WTC11 (cell line): ENCODE measurements at regions of chr1 and their contacts with region 1.

Region 1: DNA sequence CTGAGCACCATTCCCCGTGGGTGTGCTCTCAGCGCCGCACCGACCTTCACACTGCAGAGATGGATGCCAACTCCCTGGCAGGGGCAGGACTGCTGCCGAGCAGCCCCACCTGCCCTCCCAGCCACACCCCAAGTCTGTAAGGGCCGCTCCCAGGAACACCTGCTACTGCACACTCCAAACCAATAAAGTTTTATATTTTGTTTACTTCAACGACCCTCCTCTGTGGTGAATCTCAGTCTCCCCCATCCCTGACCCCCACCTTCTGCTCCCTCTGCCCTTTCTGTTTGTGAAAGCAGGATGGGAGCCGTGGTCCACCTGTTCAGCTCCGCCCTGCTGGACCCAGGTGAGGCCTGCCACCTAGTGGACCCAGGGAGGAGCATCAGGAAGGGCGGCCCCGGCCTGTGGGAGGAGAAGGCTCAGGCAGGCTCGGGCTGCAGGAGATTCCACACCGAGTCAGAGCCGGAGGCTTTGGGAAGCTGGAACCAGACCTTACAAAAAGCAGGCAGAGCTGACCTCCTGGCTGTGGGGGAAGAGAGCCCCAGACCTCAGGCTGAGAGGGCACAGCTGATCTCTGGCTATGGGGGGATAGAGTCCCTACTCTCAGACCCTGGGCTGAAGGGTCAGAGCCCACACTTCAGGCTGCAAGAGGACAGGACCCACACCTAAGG is 982 bp upstream of the TMEM82 start:
- DNase-seq: peak; percentile 93
- ATAC-seq: peak; percentile 93
- H3K4me3 Mint-ChIP-seq: peak overlapping the region; percentile 29; the same call in 1 of the 2 replicates
- H3K27ac Mint-ChIP-seq: peak overlapping the region; percentile 36
- H3K4me1 Mint-ChIP-seq: peaks cover 8% of the 10 kb centered on the region
- H3K27me3 Mint-ChIP-seq: no peaks in the 10 kb centered on the region; the same call in 1 of the 2 replicates
- CTCF ChIP-seq: peak; percentile 80

Region 2: DNA sequence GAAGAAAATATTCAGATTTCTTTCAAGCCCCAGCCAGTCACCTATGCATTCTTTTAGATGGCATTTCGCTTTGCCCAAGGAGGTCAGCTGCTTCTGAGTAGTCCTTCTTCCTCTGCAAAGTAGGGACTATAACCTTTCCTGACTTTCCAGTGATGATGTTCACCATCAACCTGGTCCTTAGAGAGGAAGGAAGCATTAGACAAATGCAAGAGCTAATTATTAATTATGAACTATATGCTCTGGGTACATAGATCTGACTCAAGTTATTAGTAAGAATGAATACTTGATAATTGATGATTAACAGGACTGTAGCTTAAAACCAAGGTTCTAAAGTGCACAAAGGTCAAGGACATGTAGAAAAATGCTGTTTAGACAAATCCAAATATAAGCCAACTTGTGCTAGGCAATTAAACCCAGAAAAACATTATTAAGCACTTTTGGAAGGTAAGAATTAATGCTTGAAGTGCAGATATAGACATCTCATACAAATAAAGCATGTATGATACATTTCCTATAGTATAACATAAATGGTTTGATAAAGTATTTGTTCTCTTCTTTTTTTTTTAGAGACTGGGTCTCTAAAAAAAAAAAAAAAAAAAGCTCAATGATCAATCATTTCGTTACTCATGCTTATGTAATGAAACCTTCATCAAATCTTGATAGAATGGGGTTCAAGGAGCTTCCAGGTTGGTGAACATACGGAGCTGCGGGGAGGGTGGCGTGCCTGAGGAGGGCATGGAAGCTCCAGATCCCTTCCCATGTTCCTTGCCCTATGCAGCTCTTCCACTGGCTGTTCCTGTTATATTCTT is 145.3 kb before region 1 on chr1:
- CTCF ChIA-PET with region 1: interaction called, 26 read pairs
- POLR2A ChIA-PET with region 1: interaction called, 4 read pairs
- DNase-seq: no peak
- ATAC-seq: peak; percentile 16; the same call in 1 of the 2 replicates
- H3K4me3 Mint-ChIP-seq: no peak overlapping the region
- H3K27ac Mint-ChIP-seq: no peak overlapping the region
- H3K4me1 Mint-ChIP-seq: peaks cover 7% of the 10 kb centered on the region
- H3K27me3 Mint-ChIP-seq: peaks cover 5% of the 10 kb centered on the region
- CTCF ChIP-seq: no peak

Region 3: DNA sequence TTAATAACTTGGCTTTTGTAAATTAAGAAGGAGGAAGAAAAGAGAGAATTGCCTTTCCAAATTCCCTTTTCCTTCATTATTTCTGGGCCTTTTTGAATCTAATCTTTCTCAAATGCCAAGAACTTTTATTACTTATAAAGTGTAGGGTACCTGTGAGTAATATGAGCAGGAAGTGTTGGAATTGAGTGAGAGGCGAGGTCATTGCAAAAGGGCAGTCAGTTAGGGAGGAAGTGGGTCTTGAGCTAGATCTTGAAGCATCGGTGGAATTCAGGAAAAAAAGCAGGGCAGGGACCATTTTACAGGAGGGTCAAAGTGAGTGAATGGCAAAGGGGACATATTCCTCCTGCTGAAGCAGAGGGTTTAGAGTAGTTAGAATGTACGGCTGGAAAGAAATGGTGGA is 100.7 kb before region 1 on chr1:
- CTCF ChIA-PET with region 1: no interaction called
- POLR2A ChIA-PET with region 1: no interaction called
- DNase-seq: no peak
- ATAC-seq: no peak
- H3K4me3 Mint-ChIP-seq: no peak overlapping the region
- H3K27ac Mint-ChIP-seq: 0 out of 2 replicates have a peak overlapping the region, but pooled peaks have one; percentile 7
- H3K4me1 Mint-ChIP-seq: no peaks in the 10 kb centered on the region
- H3K27me3 Mint-ChIP-seq: no peaks in the 10 kb centered on the region
- CTCF ChIP-seq: no peak

Region 4: DNA sequence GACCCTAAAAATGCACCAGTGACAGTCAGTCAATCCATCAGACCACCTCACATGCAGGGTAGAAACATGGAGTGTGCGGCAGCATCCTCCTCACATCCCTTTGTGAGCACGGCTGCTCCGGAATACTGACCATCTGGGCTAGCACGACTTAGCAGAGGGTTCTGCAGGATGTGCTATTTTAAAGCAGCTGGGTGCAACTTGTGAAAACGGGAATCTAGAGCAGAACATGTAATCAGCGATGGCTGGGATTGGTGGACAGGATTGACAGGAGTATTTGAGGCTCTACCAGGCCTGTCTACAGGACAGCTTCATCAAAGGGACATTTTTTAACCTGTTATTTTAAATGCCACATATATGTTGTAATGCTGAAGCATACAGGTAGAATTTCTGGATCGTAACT is 74.0 kb before region 1 on chr1:
- CTCF ChIA-PET with region 1: interaction called, 20 read pairs
- POLR2A ChIA-PET with region 1: no interaction called
- DNase-seq: no peak
- ATAC-seq: no peak
- H3K4me3 Mint-ChIP-seq: no peak overlapping the region
- H3K27ac Mint-ChIP-seq: peak overlapping the region; percentile 48; the same call in 1 of the 2 replicates
- H3K4me1 Mint-ChIP-seq: peaks cover 36% of the 10 kb centered on the region
- H3K27me3 Mint-ChIP-seq: no peaks in the 10 kb centered on the region
- CTCF ChIP-seq: no peak

Region 5: DNA sequence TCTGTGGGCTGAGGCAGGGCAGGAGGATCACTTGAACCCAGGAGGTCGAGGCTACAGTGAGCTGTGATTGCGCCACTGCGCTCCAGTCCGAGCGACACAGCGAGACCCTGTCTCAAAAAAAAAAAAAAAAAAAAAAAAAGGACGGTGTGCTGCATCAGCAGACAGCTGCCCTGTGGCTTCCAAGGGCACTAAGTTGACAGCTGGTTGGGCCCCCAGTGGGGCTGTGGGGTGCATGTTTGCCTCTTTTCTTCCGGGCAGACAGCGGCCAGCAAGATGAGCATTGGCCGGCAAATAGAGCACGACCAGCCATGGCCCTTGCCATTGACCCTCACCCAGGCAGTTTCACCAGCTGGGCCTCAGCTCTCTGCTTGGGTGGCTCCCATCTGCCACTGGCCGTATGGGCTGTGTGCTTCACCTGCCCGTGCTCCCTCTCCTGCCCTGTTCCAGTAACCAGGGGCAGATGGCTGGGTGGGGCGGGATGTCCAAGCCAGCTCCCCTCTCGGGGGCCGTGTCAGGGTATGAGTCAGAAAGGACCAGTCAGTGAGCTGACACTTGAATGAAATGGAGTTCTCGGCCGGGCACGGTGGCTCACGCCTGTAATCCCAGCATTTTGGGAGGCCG is 17.6 kb before region 1 on chr1:
- CTCF ChIA-PET with region 1: interaction called, 15 read pairs
- POLR2A ChIA-PET with region 1: no interaction called
- DNase-seq: no peak
- ATAC-seq: no peak
- H3K4me3 Mint-ChIP-seq: no peak overlapping the region
- H3K27ac Mint-ChIP-seq: no peak overlapping the region
- H3K4me1 Mint-ChIP-seq: no peaks in the 10 kb centered on the region
- H3K27me3 Mint-ChIP-seq: no peaks in the 10 kb centered on the region
- CTCF ChIP-seq: no peak

Region 6: DNA sequence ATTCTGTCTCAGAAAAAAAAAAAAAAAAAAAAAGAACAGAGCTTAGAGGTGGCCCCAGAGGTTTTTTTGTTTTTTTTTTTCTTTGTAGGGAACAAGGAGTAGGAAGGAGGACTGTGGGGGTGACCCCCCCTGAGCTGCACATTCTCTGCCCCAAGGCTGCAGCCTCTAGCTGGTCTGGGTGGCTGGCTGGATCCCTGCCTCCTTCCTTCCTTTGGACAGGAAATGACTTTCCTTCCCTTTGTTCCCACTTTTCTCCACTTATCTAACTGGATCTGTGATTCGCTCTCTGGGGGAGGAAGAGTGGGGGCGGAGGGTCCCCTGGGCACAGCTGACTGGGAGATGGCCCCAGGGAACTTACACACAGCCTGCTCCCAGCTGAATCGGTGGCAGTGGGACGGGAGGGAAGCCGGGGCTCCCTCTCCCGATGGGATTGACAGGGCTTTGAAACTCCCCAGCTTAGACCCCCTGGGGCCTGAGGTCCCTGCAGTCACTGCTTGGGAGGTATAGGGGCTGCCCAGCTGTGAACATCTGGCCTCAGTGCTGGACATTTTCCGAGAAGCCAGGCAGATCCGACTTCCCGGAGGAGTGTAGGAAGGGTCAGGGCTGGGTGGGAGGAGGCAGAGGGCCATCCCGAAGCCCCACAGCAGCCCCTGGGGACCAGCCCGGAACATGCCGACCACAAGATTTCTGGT is 19.3 kb after region 1 on chr1:
- CTCF ChIA-PET with region 1: interaction called, 51 read pairs
- POLR2A ChIA-PET with region 1: interaction called, 6 read pairs
- DNase-seq: no peak
- ATAC-seq: peak; percentile 5; the same call in 1 of the 2 replicates
- H3K4me3 Mint-ChIP-seq: peak overlapping the region; percentile 91
- H3K27ac Mint-ChIP-seq: peak overlapping the region; percentile 65; the same call in 1 of the 2 replicates
- H3K4me1 Mint-ChIP-seq: peaks cover 49% of the 10 kb centered on the region
- H3K27me3 Mint-ChIP-seq: no peaks in the 10 kb centered on the region
- CTCF ChIP-seq: no peak